Endothelial cell of umbilical vein (primary cell): ENCODE measurements at regions of chr19 and their contacts with region 1.

Region 1: DNA sequence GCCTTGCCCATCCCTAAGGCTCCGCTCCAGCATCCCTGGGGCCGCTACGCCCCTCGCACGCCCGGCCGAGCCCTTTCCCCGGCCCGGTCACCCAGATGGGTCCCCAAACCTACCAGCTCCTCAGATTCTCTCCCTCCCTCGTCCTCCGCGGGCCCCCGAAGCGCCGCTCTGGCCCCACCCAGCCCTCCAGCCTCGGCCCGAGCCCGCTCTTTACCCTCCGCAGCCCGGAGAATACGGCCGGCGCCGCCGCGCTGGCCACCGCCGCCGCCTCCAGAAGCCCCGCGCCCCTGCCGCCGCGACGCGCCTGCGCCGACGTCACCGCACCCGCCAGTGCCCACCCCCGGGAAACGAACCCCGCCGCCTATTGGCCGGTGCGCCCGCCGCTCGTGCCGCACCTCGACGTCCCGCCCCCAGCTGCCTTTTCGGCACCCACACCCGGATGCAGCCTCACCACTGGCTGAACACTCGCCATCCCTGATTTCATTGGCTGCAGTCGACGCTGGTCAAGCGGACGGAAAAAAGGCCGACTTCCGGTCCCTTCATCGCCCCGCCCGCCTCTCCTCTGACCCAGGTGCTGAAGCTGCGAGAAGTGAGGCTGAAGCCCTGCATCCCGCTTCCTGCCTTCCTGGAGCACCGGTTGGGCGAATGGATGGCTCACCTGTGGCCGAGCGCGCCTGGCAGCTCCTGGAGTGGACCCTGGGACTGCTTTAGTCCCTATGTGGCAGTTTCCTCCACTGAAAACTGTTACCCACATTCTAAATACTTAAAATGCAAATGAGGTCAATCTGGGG is at the start of gene DAPK3:
- DNase-seq: peak; percentile 99
- H3K4me3 ChIP-seq: peak within 1 kb of the TSS; percentile 79 to 93 (median 86)
- H3K27ac ChIP-seq: peak within 1 kb of the TSS; percentile 92
- H3K4me1 ChIP-seq: peaks cover 23% of the 10 kb centered on the region
- H3K27me3 ChIP-seq: no peaks in the 10 kb centered on the region
- CTCF ChIP-seq: no peak
- POLR2A ChIP-seq: peak; percentile 83
- total RNA-seq, gene DAPK3: 157 and 170 TPM in 2 replicates

Region 2: GRCh38 chr19:3762501-3763459 is 208.2 kb before region 1 on chr19 and contains the start of gene MRPL54:
- CTCF ChIA-PET with region 1: no interaction called
- POLR2A ChIA-PET with region 1: no interaction called
- dilution Hi-C with region 1: no loop called
- intact Hi-C with region 1: loop called (anchors 2 kb)
- DNase-seq: peak; percentile 100
- H3K4me3 ChIP-seq: peak within 1 kb of the TSS; percentile 64 to 93 (median 83)
- H3K27ac ChIP-seq: peak within 1 kb of the TSS; percentile 92
- H3K4me1 ChIP-seq: peaks cover 14% of the 10 kb centered on the region
- H3K27me3 ChIP-seq: no peaks in the 10 kb centered on the region
- CTCF ChIP-seq: no peak
- POLR2A ChIP-seq: peak; percentile 74
- total RNA-seq, gene MRPL54: 67.5 and 76.3 TPM in 2 replicates

Region 3: GRCh38 chr19:3852614-3853254 is 118.3 kb before region 1 on chr19:
- CTCF ChIA-PET with region 1: interaction called, 3 read pairs
- POLR2A ChIA-PET with region 1: no interaction called
- dilution Hi-C with region 1: no loop called
- intact Hi-C with region 1: loop called (anchors 1 kb)
- DNase-seq: peak; percentile 30
- H3K4me3 ChIP-seq: no peak overlapping the region
- H3K27ac ChIP-seq: no peak overlapping the region
- H3K4me1 ChIP-seq: no peaks in the 10 kb centered on the region
- H3K27me3 ChIP-seq: no peaks in the 10 kb centered on the region
- CTCF ChIP-seq: peak; percentile 29 to 53
- POLR2A ChIP-seq: no peak

Region 4: DNA sequence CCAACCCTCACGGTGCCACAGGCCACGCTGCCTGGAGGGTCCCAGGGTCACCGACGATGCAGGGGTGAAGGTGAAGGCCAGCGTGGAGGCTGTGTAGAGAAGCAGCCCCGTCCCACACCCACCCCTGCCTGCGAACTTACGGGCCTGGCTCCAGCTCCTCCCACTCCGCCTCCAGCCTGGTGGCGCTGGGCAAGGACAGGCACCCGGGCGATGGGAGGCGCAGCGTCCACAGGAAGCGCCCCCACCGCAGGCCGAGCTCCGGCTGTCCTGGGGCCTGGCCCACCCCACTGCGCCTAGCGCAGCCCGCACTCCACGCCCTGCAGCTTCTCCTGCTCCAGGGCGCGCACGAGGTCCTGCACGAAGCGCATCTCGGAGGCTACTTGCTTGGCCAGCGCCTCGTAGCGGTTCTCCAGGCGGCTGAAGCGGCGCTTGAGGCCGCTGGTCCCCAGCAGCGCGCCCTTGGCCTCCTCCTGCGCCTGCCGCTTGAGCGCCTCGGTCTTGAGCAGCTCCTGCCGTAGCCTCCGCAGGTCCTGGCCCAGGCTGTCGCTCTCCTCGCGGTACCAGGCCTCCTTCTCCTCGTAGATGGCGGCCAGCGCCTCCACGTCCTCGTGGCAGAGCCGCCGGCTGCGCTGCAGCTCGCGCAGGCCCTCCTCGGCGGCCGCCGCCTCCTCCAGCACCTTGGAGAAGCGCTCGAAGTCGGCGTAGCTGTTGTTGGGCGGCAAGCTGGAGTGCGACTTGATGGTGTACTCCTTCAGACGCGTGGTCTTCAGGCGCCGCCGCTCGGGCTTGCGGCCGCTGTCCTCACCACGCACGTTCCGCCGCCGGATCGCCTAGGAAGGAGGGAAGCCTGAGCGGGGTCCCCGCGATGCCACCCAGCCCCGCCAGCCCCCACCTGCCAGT is 11.9 kb before region 1 on chr19:
- CTCF ChIA-PET with region 1: interaction called, 3 read pairs
- POLR2A ChIA-PET with region 1: interaction called, 13 read pairs
- dilution Hi-C with region 1: no loop called
- intact Hi-C with region 1: no loop called
- DNase-seq: no peak
- H3K4me3 ChIP-seq: no peak overlapping the region
- H3K27ac ChIP-seq: no peak overlapping the region
- H3K4me1 ChIP-seq: no peaks in the 10 kb centered on the region
- H3K27me3 ChIP-seq: no peaks in the 10 kb centered on the region
- CTCF ChIP-seq: no peak
- POLR2A ChIP-seq: no peak

Region 5: DNA sequence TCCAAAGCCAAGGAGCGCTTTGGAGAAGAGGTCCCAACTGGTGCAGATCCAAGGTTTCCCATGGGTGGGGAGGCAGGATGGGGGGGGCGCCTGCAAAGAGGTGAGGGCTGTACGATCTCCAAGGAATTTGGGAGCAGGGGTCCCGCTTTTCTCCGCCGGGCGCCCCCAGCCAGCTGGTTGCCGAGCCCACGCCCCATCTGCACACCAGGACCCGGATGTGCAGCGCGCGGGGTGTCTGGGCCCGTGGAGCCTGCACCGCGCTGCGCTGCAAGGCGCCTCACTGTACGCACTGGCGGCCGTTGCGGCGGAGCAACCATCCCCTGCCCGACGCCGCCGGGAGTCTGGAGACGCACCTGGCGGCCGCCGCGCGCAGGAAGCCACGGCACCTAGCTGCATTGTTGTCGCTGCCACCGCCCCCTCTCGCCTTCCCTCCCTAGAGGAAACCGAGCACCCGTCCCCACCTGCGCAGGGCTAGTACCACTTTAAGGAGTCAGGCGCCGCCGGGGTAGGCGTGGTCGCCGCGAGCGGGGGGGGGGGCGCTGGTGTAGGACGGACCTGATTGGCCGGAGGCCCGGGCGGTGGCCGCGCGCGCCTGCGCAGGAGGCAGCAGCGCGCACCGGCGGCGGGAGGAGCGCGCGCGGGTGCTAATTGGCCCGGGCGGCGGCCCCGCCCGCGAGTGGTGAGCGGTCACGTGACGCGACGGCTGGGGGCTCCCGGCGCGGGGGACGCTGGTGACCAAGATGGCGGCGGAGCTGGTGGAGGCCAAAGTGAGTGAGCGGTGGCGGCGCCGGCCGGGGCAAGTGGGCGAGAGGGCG is 36.2 kb after region 1 on chr19 and contains the start of gene PIAS4:
- CTCF ChIA-PET with region 1: interaction called, 3 read pairs
- POLR2A ChIA-PET with region 1: no interaction called
- dilution Hi-C with region 1: no loop called
- intact Hi-C with region 1: loop called (anchors 1 kb)
- DNase-seq: peak; percentile 95
- H3K4me3 ChIP-seq: peak within 1 kb of the TSS; percentile 75 to 97 (median 94)
- H3K27ac ChIP-seq: peak within 1 kb of the TSS; percentile 40
- H3K4me1 ChIP-seq: peaks cover 13% of the 10 kb centered on the region
- H3K27me3 ChIP-seq: no peaks in the 10 kb centered on the region
- CTCF ChIP-seq: no peak
- POLR2A ChIP-seq: peak; percentile 70
- total RNA-seq, gene PIAS4: 46.2 and 47.2 TPM in 2 replicates

Region 6: DNA sequence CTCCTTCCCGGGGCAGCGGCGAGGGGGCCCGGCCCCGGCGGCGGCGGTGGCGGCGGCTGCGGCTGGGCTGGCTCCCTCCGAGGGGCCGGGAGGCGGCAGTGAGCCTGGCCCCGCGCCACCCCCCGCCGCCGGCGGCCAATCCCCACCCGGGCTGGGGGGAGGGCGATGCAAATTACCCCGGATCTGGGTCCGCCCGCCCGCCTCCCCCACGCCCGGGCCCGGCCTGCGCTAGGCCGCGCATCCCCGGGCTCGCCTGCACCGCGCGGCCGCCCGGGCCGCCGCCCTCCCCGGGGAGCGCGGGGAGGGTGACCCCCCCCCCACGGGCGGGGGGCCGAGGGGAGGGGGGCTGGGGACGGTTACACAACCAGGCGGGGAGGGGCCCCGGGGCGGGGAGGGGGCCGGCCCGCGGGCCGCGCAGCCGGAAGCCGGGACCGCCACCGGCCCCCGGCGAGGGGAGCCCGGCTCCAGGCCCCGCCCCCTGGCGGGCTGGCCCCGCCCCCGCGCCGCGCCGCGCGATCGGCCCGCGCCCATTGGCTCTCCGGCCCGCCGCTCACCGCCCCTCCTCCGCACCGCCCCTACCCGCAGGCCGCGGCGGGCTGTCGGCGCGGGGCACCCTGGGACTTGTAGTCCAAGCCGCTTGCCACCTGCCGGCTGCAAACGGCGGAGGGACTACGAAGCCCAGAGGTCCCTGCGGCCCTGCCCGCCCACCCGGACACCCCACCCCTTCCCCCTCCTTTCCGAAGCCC is 94.6 kb after region 1 on chr19:
- CTCF ChIA-PET with region 1: no interaction called
- POLR2A ChIA-PET with region 1: no interaction called
- dilution Hi-C with region 1: no loop called
- intact Hi-C with region 1: loop called (anchors 5 kb)
- DNase-seq: peak; percentile 94
- H3K4me3 ChIP-seq: peak overlapping the region in 1 of 3 experiments; percentile 98
- H3K27ac ChIP-seq: no peak overlapping the region
- H3K4me1 ChIP-seq: peaks cover 11% of the 10 kb centered on the region
- H3K27me3 ChIP-seq: no peaks in the 10 kb centered on the region
- CTCF ChIP-seq: no peak
- POLR2A ChIP-seq: peak; percentile 11